Mammary epithelial cell (primary cell): ENCODE measurements at regions of chr4 and their contacts with region 1.

Region 1: DNA sequence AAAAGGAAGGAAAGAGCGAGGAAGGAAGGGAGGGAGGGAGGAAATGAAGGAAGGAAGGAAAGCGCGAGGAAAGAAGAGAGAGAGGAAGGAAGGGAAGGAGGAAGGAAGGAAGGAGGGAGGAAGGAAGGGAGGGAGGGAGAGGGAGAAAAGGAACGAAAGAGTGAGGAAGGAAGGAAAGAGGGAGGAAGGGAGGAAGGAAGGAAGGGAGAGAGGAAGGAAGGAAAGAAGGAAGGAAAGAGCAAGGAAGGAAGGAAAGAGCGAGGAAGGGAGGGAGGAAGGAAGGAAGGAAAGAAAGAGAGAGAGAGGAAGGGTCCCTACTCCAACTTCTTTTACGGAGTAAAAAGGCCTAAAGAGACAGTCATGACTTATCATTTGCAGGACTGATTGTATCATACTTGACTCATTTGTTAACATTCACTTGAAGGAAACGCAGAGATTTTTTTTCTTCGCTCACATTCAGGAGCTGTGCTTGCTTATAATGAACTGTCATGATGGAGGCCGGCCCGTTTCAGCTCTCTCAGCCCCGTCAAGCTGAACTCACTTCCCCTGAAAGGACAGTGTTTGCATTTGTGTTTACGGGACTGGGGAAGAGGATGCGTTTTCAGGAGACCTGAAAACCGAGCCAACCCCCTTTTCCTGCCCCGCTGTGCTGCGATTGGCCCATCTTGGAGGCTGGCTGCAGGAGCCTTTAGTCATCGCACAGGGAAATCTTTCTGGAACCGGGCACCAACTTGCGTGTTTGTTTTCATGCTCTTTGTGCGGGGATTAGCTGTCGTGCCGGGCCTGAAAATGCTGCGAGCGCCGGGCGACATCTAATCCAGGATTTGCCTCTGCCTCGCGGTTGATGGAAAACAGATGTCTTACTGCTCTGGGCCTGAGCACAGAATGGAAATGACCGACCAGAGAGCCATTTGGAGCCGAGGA is 17.8 kb downstream of the TRIM2 start:
- DNase-seq: peak; percentile 73
- H3K4me3 ChIP-seq: peak overlapping the region; percentile 58 to 73 (median 61)
- H3K27ac ChIP-seq: peak overlapping the region; percentile 66
- H3K4me1 ChIP-seq: peaks cover 12% of the 10 kb centered on the region
- H3K27me3 ChIP-seq: no peaks in the 10 kb centered on the region
- CTCF ChIP-seq: no peak

Region 2: DNA sequence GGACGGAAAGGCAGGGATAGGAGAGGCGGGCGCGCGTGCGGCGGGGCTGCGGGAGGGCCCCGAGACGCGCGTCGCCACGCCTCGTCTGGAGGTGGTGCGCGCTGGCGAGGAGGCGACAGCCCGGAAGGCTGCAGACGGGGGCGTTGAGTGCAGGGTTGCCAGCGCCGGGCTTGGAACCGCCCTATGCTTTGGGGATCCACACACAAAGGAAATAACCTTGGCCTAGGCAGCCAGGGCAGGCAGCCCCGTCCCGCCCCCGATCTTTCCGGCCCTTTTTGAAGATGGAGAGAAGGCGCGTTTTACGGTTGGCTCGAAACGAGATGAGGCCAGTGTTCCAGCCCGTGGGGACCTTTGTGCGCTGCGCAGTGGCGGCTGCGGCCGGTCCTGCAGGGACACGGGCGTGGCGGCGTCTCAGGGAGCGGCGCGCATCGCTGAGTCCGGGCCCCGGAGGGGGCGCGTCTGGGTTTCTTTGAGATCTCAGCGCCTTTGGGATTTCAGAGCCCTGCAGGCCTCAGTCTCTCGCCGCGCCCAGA is 68.6 kb before region 1 on chr4:
- CTCF ChIA-PET with region 1: no interaction called
- dilution Hi-C with region 1: no loop called
- in situ Hi-C with region 1: no loop called
- intact Hi-C with region 1: loop called (anchors 2 kb)
- DNase-seq: peak; percentile 51
- H3K4me3 ChIP-seq: peak overlapping the region; percentile 23 to 60 (median 53)
- H3K27ac ChIP-seq: no peak overlapping the region
- H3K4me1 ChIP-seq: peaks cover 19% of the 10 kb centered on the region
- H3K27me3 ChIP-seq: no peaks in the 10 kb centered on the region
- CTCF ChIP-seq: no peak

Region 3: GRCh38 chr4:153189016-153189801 is 32.8 kb before region 1 on chr4:
- CTCF ChIA-PET with region 1: no interaction called
- dilution Hi-C with region 1: loop called (anchors 5 kb)
- in situ Hi-C with region 1: no loop called
- intact Hi-C with region 1: no loop called
- DNase-seq: no peak
- H3K4me3 ChIP-seq: no peak overlapping the region
- H3K27ac ChIP-seq: no peak overlapping the region
- H3K4me1 ChIP-seq: no peaks in the 10 kb centered on the region
- H3K27me3 ChIP-seq: no peaks in the 10 kb centered on the region
- CTCF ChIP-seq: no peak

Region 4: DNA sequence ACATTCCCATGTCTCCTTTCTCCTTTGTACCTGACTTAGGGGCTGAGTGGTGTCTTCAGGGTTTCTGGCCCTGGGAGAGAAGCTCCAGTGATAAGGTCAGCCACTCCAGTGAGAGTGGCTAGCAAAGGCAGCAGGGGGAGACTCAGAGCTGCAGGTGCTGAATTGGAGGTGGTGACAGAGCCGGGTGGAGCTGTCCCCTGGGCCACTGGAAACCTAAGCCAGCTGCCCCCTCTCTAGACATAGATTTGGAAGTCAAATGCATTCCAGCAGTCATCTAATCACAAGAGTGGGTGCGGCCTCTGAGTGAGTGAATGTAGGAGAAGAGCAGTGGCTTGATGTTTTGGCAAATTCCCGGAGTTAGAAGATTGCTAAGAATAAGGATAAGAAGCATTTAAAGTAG is 10.7 kb after region 1 on chr4:
- CTCF ChIA-PET with region 1: no interaction called
- dilution Hi-C with region 1: no loop called
- in situ Hi-C with region 1: no loop called
- intact Hi-C with region 1: loop called (anchors 1 kb)
- DNase-seq: peak; percentile 4
- H3K4me3 ChIP-seq: no peak overlapping the region
- H3K27ac ChIP-seq: no peak overlapping the region
- H3K4me1 ChIP-seq: peaks cover 42% of the 10 kb centered on the region
- H3K27me3 ChIP-seq: no peaks in the 10 kb centered on the region
- CTCF ChIP-seq: peak in 1 of 2 donors; percentile 34

Region 5: GRCh38 chr4:153318696-153319320 is 96.8 kb after region 1 on chr4:
- CTCF ChIA-PET with region 1: no interaction called
- dilution Hi-C with region 1: no loop called
- in situ Hi-C with region 1: no loop called
- intact Hi-C with region 1: loop called (anchors 5 kb)
- DNase-seq: peak; percentile 38
- H3K4me3 ChIP-seq: no peak overlapping the region
- H3K27ac ChIP-seq: no peak overlapping the region
- H3K4me1 ChIP-seq: no peaks in the 10 kb centered on the region
- H3K27me3 ChIP-seq: no peaks in the 10 kb centered on the region
- CTCF ChIP-seq: peak; percentile 73 to 82

Region 6: DNA sequence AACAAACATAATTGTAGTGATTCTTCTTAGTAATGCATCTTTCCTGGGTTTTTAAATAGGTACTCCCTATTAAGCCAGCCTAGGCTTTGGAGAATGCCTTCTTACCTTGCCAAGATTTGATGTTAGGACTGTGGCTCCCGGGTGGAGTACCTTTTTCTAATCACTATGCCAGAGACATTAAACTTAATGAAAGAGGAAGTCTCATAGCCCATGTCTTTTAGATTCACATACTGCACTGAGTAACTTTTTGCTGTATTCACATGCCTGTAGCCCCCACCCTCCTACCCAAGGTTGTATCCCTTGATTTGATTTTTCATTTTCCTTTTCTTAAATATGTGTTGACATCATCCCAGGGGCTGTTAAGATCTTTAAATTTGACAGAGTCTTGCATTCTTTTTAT is 357.8 kb after region 1 on chr4:
- CTCF ChIA-PET with region 1: no interaction called
- dilution Hi-C with region 1: no loop called
- in situ Hi-C with region 1: no loop called
- intact Hi-C with region 1: loop called (anchors 5 kb)
- DNase-seq: no peak
- H3K4me3 ChIP-seq: no peak overlapping the region
- H3K27ac ChIP-seq: no peak overlapping the region
- H3K4me1 ChIP-seq: no peaks in the 10 kb centered on the region
- H3K27me3 ChIP-seq: no peaks in the 10 kb centered on the region
- CTCF ChIP-seq: no peak